ENCODE measurements at regions of chr1 and their contacts with region 1.

Region 1: GRCh38 chr1:224329842-224330753 is at the start of gene NVL:
- DNase-seq: peak; percentile 90
- ATAC-seq: peak; percentile 97
- total RNA-seq, gene NVL: 8.3 TPM

Region 2: DNA sequence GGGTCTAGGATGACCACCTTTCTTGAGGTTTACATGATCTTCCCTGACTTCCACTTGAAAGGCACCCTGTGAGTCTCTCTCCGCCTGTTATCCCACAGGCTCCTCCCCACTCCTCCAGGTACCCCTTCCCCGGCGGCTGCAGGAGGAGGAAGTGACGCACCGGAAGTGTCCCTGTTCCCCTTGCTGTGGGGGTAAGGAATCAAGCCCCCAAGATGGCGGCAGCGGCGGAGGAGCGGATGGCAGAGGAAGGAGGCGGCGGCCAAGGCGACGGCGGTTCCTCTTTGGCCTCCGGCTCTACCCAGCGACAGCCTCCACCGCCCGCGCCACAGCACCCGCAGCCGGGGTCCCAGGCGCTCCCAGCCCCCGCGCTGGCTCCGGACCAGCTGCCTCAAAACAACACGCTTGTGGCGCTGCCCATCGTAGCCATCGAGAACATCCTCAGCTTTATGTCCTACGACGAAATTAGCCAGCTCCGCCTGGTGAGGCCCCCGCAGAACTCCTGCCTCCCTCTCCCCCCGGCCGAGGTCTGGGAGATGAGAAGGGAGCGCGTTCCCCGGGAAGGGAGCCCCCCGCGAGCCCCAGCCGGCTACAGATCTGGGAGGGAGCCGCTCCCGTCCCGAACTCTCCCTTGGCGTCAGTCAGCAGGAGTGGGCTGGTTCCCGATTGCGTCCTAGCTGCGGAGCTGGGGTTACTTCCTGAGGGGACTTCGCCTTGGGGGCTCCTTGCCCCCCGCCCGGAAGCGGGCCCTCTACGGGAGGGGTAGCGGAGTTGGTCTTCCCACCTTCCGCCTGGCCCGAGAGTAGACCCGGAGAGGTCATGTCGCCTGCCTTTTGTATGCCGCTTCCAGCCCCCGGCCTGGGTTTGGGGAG is 215.9 kb before region 1 on chr1 and contains the start of gene FBXO28:
- intact Hi-C with region 1: loop called (anchors 2 kb)
- DNase-seq: peak; percentile 97
- ATAC-seq: peak; percentile 99
- total RNA-seq, gene FBXO28: 17.3 TPM

Region 3: DNA sequence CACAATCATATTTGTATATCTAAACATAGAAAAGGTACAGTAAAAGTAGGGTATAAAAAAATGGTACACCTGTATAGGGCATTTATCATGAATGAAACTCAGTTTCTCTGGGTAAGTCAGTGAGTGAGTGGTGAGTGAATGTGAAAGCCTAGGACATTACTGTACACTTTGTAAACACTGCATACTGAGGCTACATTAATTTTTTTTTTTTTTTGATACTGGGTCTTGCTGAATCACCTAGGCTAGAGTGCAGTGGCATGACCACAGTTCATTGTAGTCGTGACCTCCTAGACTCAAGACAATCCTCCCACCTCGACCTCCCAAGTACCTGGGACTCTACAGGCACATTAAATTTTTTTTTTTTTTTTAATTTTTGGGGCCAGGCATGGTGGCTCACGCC is 188.4 kb before region 1 on chr1:
- intact Hi-C with region 1: no loop called
- DNase-seq: no peak
- ATAC-seq: no peak

Region 4: DNA sequence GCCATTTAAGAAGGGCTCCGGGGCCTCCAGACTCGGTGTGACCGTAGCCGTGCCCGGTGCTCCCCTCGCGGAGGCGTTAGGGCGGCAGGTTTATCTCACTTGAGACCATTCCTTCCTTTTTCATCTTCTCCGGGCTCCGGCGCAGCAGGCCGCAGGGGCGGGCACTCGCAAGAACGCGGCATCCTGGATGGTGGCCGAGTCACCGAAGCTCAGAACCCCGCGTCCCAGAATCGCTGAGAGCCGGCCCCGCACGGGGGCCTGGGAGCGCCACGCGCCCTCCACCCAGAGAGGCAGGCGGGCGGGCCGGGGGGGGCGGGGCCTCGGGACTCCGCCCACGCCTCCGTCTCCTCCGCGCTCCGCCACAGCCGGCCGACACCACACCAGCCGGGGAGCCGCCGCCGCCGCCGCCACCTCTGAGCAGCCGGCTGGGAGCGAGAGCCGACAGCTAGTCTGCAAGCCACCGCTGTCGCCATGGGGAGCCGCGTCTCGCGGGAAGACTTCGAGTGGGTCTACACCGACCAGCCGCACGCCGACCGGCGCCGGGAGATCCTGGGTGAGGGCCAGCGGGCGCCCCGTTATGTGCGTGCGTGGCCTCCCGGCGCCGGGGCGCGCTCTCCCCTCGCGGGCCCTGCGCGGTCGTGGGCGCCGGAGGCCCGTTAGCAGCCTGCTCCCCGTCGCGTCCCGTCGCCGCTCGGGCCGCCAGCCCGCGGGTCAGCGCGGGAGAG is 147.1 kb before region 1 on chr1 and contains the start of gene DEGS1:
- intact Hi-C with region 1: loop called (anchors 5 kb)
- DNase-seq: peak; percentile 94
- ATAC-seq: peak; percentile 96
- total RNA-seq, gene DEGS1: 63.8 TPM

Measured in Right ventricle myocardium inferior (tissue), 1 donor.